CD8-positive, alpha-beta T cell (primary cell): ENCODE measurements at regions of chr1 and their contacts with region 1.

Region 1: GRCh38 chr1:172588296-172589291 is 55.6 kb downstream of the SUCO start:
- DNase-seq: peak in 1 of 9 experiments; percentile 11
- ATAC-seq: no peak
- H3K4me3 ChIP-seq: no peak overlapping the region
- H3K4me3 Mint-ChIP-seq: no peak overlapping the region
- H3K27ac ChIP-seq: no peak overlapping the region
- H3K27ac Mint-ChIP-seq: no peak overlapping the region
- H3K4me1 ChIP-seq: no peaks in the 10 kb centered on the region
- H3K4me1 Mint-ChIP-seq: peaks cover 10% of the 10 kb centered on the region
- H3K27me3 ChIP-seq: no peaks in the 10 kb centered on the region
- H3K27me3 Mint-ChIP-seq: no peaks in the 10 kb centered on the region
- CTCF ChIP-seq: no peak

Region 2: GRCh38 chr1:172507741-172508140 is 80.9 kb before region 1 on chr1:
- CTCF ChIA-PET with region 1: no interaction called
- POLR2A ChIA-PET with region 1: no interaction called
- intact Hi-C with region 1: no loop called
- DNase-seq: no peak
- ATAC-seq: no peak
- H3K4me3 ChIP-seq: no peak overlapping the region
- H3K4me3 Mint-ChIP-seq: no peak overlapping the region
- H3K27ac ChIP-seq: no peak overlapping the region
- H3K27ac Mint-ChIP-seq: no peak overlapping the region
- H3K4me1 ChIP-seq: no peaks in the 10 kb centered on the region
- H3K4me1 Mint-ChIP-seq: no peaks in the 10 kb centered on the region
- H3K27me3 ChIP-seq: no peaks in the 10 kb centered on the region
- H3K27me3 Mint-ChIP-seq: peaks cover 6% of the 10 kb centered on the region
- CTCF ChIP-seq: no peak

Region 3: DNA sequence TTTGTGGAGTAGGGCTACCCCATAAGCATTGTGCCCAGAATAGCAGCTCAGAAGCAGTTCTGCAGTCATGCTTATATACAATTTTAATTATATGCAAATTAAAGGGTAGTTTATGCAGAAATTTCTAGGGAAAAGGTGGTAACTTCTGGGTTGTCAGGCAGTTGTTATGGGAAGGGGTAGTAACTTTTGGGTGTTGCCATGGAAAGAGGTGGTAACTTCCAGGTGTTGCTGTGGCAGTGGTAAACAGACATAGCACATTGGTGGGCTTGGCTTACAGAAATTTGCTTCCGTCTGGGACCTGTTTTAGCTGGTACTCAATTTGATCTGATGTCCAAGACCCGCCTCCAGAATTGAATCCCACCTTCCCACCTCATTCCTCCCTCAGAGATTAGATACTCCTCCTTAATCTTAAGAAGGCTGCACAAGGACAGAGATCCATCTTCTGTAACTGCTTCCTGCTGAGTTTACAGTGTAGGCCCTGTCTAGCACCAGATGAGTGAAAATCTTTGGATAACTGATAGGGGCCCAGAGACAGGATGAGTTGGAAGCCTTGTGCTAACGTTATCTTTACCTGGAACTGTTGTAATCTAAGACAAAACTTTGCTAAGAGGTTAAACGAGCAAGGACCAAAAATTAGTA is 28.9 kb before region 1 on chr1:
- CTCF ChIA-PET with region 1: no interaction called
- POLR2A ChIA-PET with region 1: no interaction called
- intact Hi-C with region 1: loop called in 1 of 2 experiments (anchors 1 kb)
- DNase-seq: no peak
- ATAC-seq: no peak
- H3K4me3 ChIP-seq: no peak overlapping the region
- H3K4me3 Mint-ChIP-seq: no peak overlapping the region
- H3K27ac ChIP-seq: no peak overlapping the region
- H3K27ac Mint-ChIP-seq: no peak overlapping the region
- H3K4me1 ChIP-seq: no peaks in the 10 kb centered on the region
- H3K4me1 Mint-ChIP-seq: peaks cover 10% of the 10 kb centered on the region
- H3K27me3 ChIP-seq: no peaks in the 10 kb centered on the region
- H3K27me3 Mint-ChIP-seq: no peaks in the 10 kb centered on the region
- CTCF ChIP-seq: no peak